ENCODE measurements at regions of chr12 and their contacts with region 1.

Region 1: GRCh38 chr12:43884683-43885410 is 49.0 kb downstream of the TMEM117 start:
- DNase-seq: peak in 1 of 2 donors; percentile 60
- H3K4me3 ChIP-seq: no peak overlapping the region
- H3K27ac ChIP-seq: peak overlapping the region in 1 of 2 donors; percentile 23
- H3K4me1 ChIP-seq: no peaks in the 10 kb centered on the region
- H3K27me3 ChIP-seq: no peaks in the 10 kb centered on the region
- CTCF ChIP-seq: no peak
- POLR2A ChIP-seq: no peak

Region 2: DNA sequence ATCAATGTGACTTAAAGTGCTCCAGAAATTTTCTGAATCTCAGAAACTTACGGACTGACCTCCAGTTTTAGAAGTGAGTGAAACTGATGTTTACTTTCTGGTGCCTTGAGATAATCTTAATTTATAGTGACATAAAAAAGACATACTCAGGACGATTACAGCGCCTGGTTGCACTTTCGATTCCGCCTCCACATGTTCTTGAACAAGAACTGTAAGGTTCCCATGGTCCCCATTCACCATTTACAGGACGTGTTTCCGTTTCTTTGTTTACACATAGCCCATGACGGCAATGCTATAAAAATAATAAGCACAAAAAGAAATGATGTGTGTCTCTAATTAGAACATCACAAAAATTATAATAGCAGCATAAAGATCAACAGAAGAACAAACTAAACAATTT is 431.1 kb before region 1 on chr12:
- intact Hi-C with region 1: loop called (anchors 5 kb)
- DNase-seq: no peak
- H3K4me3 ChIP-seq: no peak overlapping the region
- H3K27ac ChIP-seq: no peak overlapping the region
- H3K4me1 ChIP-seq: no peaks in the 10 kb centered on the region
- H3K27me3 ChIP-seq: no peaks in the 10 kb centered on the region
- CTCF ChIP-seq: no peak
- POLR2A ChIP-seq: no peak

Region 3: GRCh38 chr12:44038411-44038810 is 153.6 kb after region 1 on chr12:
- intact Hi-C with region 1: no loop called
- DNase-seq: no peak
- H3K4me3 ChIP-seq: no peak overlapping the region
- H3K27ac ChIP-seq: no peak overlapping the region
- H3K4me1 ChIP-seq: no peaks in the 10 kb centered on the region
- H3K27me3 ChIP-seq: no peaks in the 10 kb centered on the region
- CTCF ChIP-seq: no peak
- POLR2A ChIP-seq: no peak

Region 4: DNA sequence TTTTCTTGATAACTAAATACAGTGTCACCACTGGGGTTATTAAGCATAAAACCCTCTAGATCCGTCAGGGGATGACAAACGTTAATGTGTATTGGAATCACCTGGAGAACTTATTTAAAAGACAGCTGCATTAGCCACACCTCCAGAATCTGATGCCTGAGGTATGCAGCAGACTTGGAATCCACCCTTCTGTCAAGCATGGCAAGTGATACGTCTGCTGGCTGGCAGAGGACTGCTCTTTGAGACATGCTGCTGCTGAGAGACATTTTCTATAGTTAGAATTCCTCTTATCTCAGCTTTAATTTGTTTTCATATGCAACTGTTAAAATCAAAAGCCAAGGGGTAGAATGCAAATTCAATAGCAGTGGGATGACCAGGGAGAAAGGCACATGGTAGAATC is 495.0 kb after region 1 on chr12:
- intact Hi-C with region 1: no loop called
- DNase-seq: no peak
- H3K4me3 ChIP-seq: no peak overlapping the region
- H3K27ac ChIP-seq: no peak overlapping the region
- H3K4me1 ChIP-seq: no peaks in the 10 kb centered on the region
- H3K27me3 ChIP-seq: no peaks in the 10 kb centered on the region
- CTCF ChIP-seq: no peak
- POLR2A ChIP-seq: no peak